ENCODE measurements at regions of chr9 and their contacts with region 1.

Region 1: GRCh38 chr9:37710046-37710445 is 43.6 kb upstream of the TRMT10B start:
- DNase-seq: no peak

Region 2: GRCh38 chr9:37550781-37551180 is 159.3 kb before region 1 on chr9:
- intact Hi-C with region 1: no loop called
- DNase-seq: no peak

Region 3: GRCh38 chr9:37746848-37747753 is 37.1 kb after region 1 on chr9:
- intact Hi-C with region 1: no loop called
- DNase-seq: no peak

Region 4: GRCh38 chr9:37769306-37769705 is 59.3 kb after region 1 on chr9:
- intact Hi-C with region 1: loop called in 1 of 2 experiments (anchors 2 kb)
- DNase-seq: no peak

Region 5: GRCh38 chr9:38183994-38184568 is 474.0 kb after region 1 on chr9:
- intact Hi-C with region 1: no loop called
- DNase-seq: no peak

Measured in posterior vena cava (tissue), 2 donors.